Left ventricle myocardium inferior (tissue), 1 donor: ENCODE measurements at regions of chr13 and their contacts with region 1.

Region 1: DNA sequence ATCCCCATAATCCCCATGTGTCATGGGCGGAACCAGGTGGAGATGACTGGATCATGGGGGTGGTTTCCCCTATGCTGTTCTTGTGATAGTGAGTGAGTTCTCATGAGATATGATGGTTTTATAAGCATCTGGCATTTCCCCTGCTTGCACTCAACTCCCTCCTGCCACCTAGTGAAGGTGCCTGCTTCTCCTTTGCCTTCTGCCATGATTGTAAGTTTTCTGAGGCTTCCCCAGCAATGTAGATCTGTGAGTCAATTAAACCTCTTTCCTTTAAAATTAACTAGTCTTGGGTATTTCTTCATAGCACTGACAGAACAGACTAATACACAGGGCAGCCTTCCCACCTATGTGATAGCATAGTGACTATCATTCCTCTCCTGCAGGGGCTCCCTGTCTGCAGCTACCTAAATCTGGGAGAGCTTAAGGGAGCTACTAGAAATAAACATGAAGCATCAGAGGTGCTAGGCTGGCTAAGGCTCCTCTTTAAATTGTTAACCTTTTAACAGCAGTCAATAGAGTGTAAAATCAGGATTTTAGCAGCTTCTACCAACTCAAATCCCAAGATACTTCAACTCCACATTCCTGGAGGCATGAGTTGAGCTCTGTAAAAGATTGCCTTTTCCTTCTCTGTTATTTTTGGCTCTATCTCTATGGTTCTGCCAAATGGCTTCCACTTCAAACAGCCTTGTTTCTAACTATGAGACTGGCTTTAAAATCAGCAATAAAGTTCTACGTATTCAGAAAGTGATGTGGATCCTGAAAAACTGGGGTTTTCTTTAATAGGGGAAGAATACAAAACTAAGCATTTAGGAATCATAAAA is 112.3 kb downstream of the VWA8 start:
- DNase-seq: no peak
- H3K4me3 ChIP-seq: no peak overlapping the region
- H3K27ac ChIP-seq: peak overlapping the region; percentile 46
- H3K4me1 ChIP-seq: peaks cover 24% of the 10 kb centered on the region
- H3K27me3 ChIP-seq: no peaks in the 10 kb centered on the region
- CTCF ChIP-seq: peak; percentile 41

Region 2: GRCh38 chr13:41678249-41678648 is 170.4 kb before region 1 on chr13:
- intact Hi-C with region 1: loop called (anchors 10 kb)
- DNase-seq: no peak
- H3K4me3 ChIP-seq: no peak overlapping the region
- H3K27ac ChIP-seq: peak overlapping the region; percentile 49
- H3K4me1 ChIP-seq: peaks cover 37% of the 10 kb centered on the region
- H3K27me3 ChIP-seq: no peaks in the 10 kb centered on the region
- CTCF ChIP-seq: no peak

Region 3: GRCh38 chr13:41942462-41943094 is 93.9 kb after region 1 on chr13:
- intact Hi-C with region 1: no loop called
- DNase-seq: no peak
- H3K4me3 ChIP-seq: no peak overlapping the region
- H3K27ac ChIP-seq: peak overlapping the region; percentile 81
- H3K4me1 ChIP-seq: peaks cover 49% of the 10 kb centered on the region
- H3K27me3 ChIP-seq: no peaks in the 10 kb centered on the region
- CTCF ChIP-seq: peak; percentile 34